MCF 10A (cell line): ENCODE measurements at regions of chr19 and their contacts with region 1.

Region 1: DNA sequence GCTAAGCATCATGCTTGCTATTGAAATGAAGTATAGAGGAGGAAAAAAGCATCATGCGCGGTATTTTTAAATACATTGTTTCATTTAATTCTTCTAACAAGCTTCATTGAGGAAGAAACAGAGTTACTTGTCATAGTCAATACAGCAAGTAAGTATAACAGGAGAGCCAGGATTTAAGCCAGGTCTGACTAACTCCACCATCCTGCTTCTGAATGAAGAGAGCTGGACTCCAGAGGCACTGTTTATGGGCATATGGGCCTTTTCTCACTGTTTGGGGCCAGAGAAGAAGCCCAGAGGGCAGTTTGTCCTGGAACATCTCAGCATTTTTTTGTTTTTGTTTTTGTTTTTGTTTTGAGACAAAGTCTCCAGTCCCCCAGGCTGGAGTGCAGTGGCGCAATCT is 7.9 kb downstream of the SAMD4B start:
- DNase-seq: no peak
- H3K4me3 Mint-ChIP-seq: no peak overlapping the region
- H3K27ac Mint-ChIP-seq: no peak overlapping the region
- H3K4me1 Mint-ChIP-seq: peaks cover 23% of the 10 kb centered on the region
- H3K27me3 Mint-ChIP-seq: no peaks in the 10 kb centered on the region
- CTCF ChIP-seq: no peak

Region 2: GRCh38 chr19:39363901-39364457 is 13.8 kb after region 1 on chr19:
- CTCF ChIA-PET with region 1: interaction called, 12 read pairs
- POLR2A ChIA-PET with region 1: interaction called, 4 read pairs
- intact Hi-C with region 1: no loop called
- DNase-seq: no peak
- H3K4me3 Mint-ChIP-seq: no peak overlapping the region
- H3K27ac Mint-ChIP-seq: no peak overlapping the region
- H3K4me1 Mint-ChIP-seq: peaks cover 10% of the 10 kb centered on the region
- H3K27me3 Mint-ChIP-seq: no peaks in the 10 kb centered on the region
- CTCF ChIP-seq: no peak